CD4-positive, alpha-beta T cell (primary cell): ENCODE measurements at regions of chr16 and their contacts with region 1.

Region 1: DNA sequence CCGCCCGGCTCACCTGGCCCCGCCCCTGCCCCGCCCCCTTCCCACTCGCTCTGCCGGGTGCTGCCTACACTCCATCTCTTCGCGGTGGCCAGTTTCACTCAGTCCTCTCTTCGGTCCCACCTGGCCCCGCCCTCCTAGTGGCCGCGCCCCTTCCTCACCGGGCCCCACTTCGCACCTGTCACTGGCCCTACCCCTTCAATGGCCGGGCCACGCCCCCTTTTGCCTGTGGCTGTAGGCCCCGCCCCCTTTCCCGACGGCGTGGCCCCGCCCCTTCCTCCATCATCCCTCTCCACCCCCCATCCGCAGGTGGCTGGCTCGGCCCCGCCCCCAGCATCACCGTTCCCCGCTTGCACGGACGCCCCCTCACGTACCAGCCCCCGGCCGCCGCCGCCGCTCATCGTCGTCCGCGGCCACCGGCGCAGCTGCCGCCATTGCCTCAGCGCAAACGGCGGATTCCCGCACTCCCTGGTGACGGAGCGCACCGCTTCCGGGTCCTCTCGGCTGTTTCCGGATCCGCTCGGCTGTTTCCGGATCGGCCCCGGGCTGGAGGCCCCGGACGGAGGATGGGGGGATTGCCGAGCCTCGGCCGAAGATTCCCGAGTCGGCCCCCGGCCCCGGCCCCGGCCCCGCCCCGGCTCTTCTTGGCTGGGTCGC is at the start of gene RABEP2:
- DNase-seq: peak; percentile 88 to 97 (median 95)
- ATAC-seq: peak; percentile 79
- H3K4me3 ChIP-seq: peak within 1 kb of the TSS; percentile 92
- H3K4me3 Mint-ChIP-seq: peak within 1 kb of the TSS; percentile 91
- H3K27ac ChIP-seq: peak within 1 kb of the TSS; percentile 93 to 98
- H3K27ac Mint-ChIP-seq: peak within 1 kb of the TSS; percentile 97
- H3K4me1 ChIP-seq: peaks cover 14% of the 10 kb centered on the region
- H3K4me1 Mint-ChIP-seq: peaks cover 20% of the 10 kb centered on the region
- H3K27me3 ChIP-seq: no peaks in the 10 kb centered on the region
- H3K27me3 Mint-ChIP-seq: no peaks in the 10 kb centered on the region
- CTCF ChIP-seq: no peak
- total RNA-seq, gene RABEP2: 23.3 to 23.4 TPM

Region 2: GRCh38 chr16:28879841-28880588 is 44.8 kb before region 1 on chr16:
- CTCF ChIA-PET with region 1: interaction called, 3 read pairs
- POLR2A ChIA-PET with region 1: interaction called, 9 read pairs
- intact Hi-C with region 1: loop called in 1 of 2 experiments (anchors 2 kb)
- DNase-seq: peak; percentile 80 to 92 (median 87)
- ATAC-seq: peak; percentile 98
- H3K4me3 ChIP-seq: peak overlapping the region; percentile 95
- H3K4me3 Mint-ChIP-seq: peak overlapping the region; percentile 87
- H3K27ac ChIP-seq: no peak overlapping the region
- H3K27ac Mint-ChIP-seq: no peak overlapping the region
- H3K4me1 ChIP-seq: peaks cover 20% of the 10 kb centered on the region
- H3K4me1 Mint-ChIP-seq: peaks cover 8% of the 10 kb centered on the region
- H3K27me3 ChIP-seq: peaks cover 0 to 9% of the 10 kb centered on the region in 2 experiments
- H3K27me3 Mint-ChIP-seq: peaks cover 6% of the 10 kb centered on the region
- CTCF ChIP-seq: no peak

Region 3: DNA sequence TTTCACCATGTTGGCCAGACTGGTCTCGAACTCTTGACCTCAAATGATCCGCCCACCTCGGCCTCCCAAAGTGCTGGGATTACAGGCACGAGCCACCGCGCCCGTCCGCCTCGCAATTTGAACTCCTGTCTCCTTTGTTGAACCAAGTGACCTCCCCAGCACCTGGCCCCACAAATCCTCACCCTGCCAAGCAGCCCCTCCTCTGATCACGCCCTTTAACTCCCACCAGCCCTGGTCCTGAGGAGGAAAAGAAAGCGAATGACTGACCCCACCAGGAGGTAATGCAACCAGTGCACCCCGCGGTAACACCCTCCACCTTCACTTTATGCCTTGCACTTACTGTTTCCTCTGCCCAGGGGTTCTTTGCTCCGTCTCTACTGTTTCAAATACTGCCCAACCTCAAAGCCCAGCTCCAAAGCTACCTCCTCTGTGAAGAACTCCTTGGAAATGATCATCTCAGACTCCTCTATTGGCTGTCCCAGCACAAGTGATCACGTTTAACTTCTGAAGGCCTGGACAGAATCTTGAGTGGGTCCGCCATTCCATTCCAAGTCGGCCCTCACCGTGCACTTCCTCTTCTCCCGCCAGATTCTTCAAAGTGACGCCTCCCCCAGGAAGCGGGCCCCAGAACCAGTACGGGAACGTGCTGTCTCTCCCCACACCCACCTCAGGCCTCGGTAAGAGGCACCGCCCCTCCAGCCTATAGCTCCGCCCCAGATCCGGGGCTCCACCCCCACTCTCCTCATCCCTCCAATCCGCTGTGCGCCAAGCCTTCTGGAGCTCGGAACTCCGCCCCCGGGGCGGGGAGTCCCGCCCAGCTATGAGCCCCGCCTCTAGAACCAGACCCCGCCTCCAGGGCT is 11.3 kb after region 1 on chr16:
- CTCF ChIA-PET with region 1: no interaction called
- POLR2A ChIA-PET with region 1: interaction called, 11 read pairs
- intact Hi-C with region 1: no loop called
- DNase-seq: peak; percentile 64 to 93 (median 82)
- ATAC-seq: peak; percentile 100
- H3K4me3 ChIP-seq: peak overlapping the region; percentile 36
- H3K4me3 Mint-ChIP-seq: peak overlapping the region; percentile 80
- H3K27ac ChIP-seq: no peak overlapping the region
- H3K27ac Mint-ChIP-seq: peak overlapping the region; percentile 47
- H3K4me1 ChIP-seq: peaks cover 15% of the 10 kb centered on the region
- H3K4me1 Mint-ChIP-seq: peaks cover 28% of the 10 kb centered on the region
- H3K27me3 ChIP-seq: no peaks in the 10 kb centered on the region
- H3K27me3 Mint-ChIP-seq: no peaks in the 10 kb centered on the region
- CTCF ChIP-seq: no peak

Region 4: DNA sequence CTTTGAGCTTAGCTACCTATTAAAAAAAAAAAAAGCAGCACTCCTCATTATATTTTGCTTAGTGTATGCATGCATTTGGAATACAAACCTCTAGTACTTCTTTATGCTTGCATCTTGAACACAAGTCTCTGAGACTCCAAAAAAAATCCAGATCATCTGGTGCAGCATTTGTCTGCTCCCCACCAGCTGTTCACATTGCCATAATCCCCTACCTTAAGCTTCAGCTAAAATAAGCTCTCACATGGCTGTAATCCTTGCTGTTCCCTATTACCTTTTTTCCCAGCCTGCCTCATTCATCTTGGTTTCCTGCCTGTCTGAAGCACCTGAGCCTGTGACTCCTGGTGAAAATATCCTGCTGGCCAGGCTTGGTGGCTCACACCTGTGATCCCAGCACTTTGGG is 18.4 kb after region 1 on chr16:
- CTCF ChIA-PET with region 1: interaction called, 34 read pairs
- POLR2A ChIA-PET with region 1: interaction called, 13 read pairs
- intact Hi-C with region 1: loop called in 1 of 2 experiments (anchors 2 kb)
- DNase-seq: no peak
- ATAC-seq: no peak
- H3K4me3 ChIP-seq: no peak overlapping the region
- H3K4me3 Mint-ChIP-seq: no peak overlapping the region
- H3K27ac ChIP-seq: no peak overlapping the region
- H3K27ac Mint-ChIP-seq: no peak overlapping the region
- H3K4me1 ChIP-seq: peaks cover 8% of the 10 kb centered on the region
- H3K4me1 Mint-ChIP-seq: peaks cover 11% of the 10 kb centered on the region
- H3K27me3 ChIP-seq: no peaks in the 10 kb centered on the region
- H3K27me3 Mint-ChIP-seq: no peaks in the 10 kb centered on the region
- CTCF ChIP-seq: no peak

Region 5: DNA sequence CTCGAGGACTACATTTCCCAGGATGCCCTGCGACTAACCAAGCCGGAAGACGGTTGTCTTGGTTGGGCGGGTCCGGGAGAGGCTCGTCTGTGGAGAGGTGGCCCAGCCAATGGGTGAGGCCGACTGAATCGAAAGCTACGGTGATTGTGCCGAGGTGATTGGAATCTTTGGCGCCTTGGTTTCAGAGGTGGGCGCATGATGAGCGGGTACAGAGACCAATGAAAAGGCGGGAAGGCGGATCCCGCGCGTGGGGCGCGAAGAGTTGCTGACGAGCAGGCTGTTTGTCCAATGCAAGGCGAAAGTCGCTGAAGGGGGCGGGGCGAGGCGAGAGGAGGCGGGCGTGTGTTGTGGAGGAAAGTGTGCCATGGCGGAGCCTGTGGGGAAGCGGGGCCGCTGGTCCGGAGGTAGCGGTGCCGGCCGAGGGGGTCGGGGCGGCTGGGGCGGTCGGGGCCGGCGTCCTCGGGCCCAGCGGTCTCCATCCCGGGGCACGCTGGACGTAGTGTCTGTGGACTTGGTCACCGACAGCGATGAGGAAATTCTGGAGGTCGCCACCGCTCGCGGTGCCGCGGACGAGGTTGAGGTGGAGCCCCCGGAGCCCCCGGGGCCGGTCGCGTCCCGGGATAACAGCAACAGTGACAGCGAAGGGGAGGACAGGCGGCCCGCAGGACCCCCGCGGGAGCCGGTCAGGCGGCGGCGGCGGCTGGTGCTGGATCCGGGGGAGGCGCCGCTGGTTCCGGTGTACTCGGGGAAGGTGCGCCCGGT is 26.0 kb after region 1 on chr16 and contains the start of gene NFATC2IP:
- CTCF ChIA-PET with region 1: interaction called, 34 read pairs
- POLR2A ChIA-PET with region 1: interaction called, 13 read pairs
- intact Hi-C with region 1: no loop called
- DNase-seq: peak; percentile 98 to 100 (median 99)
- ATAC-seq: peak; percentile 95
- H3K4me3 ChIP-seq: peak within 1 kb of the TSS; percentile 77
- H3K4me3 Mint-ChIP-seq: peak within 1 kb of the TSS; percentile 96
- H3K27ac ChIP-seq: peak within 1 kb of the TSS; percentile 36 to 63
- H3K27ac Mint-ChIP-seq: peak within 1 kb of the TSS; percentile 74
- H3K4me1 ChIP-seq: peaks cover 31% of the 10 kb centered on the region
- H3K4me1 Mint-ChIP-seq: peaks cover 28% of the 10 kb centered on the region
- H3K27me3 ChIP-seq: no peaks in the 10 kb centered on the region
- H3K27me3 Mint-ChIP-seq: no peaks in the 10 kb centered on the region
- CTCF ChIP-seq: no peak
- total RNA-seq, gene NFATC2IP: 47.4 to 51.0 TPM